CD8-positive, alpha-beta T cell (primary cell): ENCODE measurements at regions of chr20 and their contacts with region 1.

Region 1: DNA sequence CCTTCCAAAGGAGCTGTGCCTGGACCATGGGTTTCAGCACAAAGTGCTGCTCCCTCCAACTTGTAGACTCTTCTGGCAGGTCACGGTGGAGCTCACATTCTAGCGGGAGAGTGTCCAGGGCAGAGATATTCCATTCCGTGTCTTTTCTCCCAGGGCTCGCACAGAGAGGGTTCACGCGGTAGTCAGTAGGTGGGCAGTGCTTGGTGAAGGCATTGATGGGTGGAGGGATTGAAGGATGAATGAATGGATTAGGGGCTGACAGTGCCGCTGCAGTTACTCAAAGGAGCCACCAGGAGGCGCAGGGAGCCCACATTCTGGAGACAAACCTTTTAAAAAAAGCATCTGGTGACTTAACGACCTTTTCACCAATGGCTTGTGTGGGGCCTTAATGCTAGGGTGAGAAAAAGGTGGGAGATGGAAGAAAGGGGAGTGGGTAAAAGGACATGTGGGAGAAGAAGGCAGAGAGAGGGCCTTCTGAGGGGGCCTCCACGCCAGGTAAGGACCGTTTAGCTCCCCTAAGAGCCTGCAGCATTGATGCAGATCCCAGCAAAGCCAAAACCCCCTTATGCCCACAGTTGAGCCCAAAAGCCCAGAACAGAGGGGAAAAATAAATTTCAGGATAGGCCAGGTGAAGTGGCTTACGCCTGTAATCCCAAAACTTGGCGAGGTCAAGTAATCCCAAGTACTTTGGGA is 17.5 kb upstream of the FAM110A start:
- DNase-seq: peak; percentile 44 to 81 (median 72)
- ATAC-seq: peak; percentile 79
- H3K4me3 ChIP-seq: no peak overlapping the region
- H3K4me3 Mint-ChIP-seq: no peak overlapping the region
- H3K27ac ChIP-seq: no peak overlapping the region
- H3K27ac Mint-ChIP-seq: no peak overlapping the region
- H3K4me1 ChIP-seq: peaks cover 3% of the 10 kb centered on the region
- H3K4me1 Mint-ChIP-seq: peaks cover 5% of the 10 kb centered on the region
- H3K27me3 ChIP-seq: no peaks in the 10 kb centered on the region
- H3K27me3 Mint-ChIP-seq: peaks cover 19% of the 10 kb centered on the region
- CTCF ChIP-seq: peak; percentile 93

Region 2: GRCh38 chr20:833450-834150 is 17.5 kb after region 1 on chr20 and contains the start of gene FAM110A:
- CTCF ChIA-PET with region 1: interaction called, 14 read pairs
- POLR2A ChIA-PET with region 1: no interaction called
- intact Hi-C with region 1: no loop called
- DNase-seq: peak; percentile 89 to 99 (median 96)
- ATAC-seq: peak; percentile 96
- H3K4me3 ChIP-seq: peak within 1 kb of the TSS; percentile 90 to 96
- H3K4me3 Mint-ChIP-seq: peak within 1 kb of the TSS; percentile 91
- H3K27ac ChIP-seq: peak within 1 kb of the TSS; percentile 85 to 96
- H3K27ac Mint-ChIP-seq: peak within 1 kb of the TSS; percentile 82
- H3K4me1 ChIP-seq: peaks cover 27% of the 10 kb centered on the region
- H3K4me1 Mint-ChIP-seq: peaks cover 43% of the 10 kb centered on the region
- H3K27me3 ChIP-seq: no peaks in the 10 kb centered on the region
- H3K27me3 Mint-ChIP-seq: no peaks in the 10 kb centered on the region
- CTCF ChIP-seq: no peak
- total RNA-seq, gene FAM110A: 6.7 to 7.7 TPM

Region 3: DNA sequence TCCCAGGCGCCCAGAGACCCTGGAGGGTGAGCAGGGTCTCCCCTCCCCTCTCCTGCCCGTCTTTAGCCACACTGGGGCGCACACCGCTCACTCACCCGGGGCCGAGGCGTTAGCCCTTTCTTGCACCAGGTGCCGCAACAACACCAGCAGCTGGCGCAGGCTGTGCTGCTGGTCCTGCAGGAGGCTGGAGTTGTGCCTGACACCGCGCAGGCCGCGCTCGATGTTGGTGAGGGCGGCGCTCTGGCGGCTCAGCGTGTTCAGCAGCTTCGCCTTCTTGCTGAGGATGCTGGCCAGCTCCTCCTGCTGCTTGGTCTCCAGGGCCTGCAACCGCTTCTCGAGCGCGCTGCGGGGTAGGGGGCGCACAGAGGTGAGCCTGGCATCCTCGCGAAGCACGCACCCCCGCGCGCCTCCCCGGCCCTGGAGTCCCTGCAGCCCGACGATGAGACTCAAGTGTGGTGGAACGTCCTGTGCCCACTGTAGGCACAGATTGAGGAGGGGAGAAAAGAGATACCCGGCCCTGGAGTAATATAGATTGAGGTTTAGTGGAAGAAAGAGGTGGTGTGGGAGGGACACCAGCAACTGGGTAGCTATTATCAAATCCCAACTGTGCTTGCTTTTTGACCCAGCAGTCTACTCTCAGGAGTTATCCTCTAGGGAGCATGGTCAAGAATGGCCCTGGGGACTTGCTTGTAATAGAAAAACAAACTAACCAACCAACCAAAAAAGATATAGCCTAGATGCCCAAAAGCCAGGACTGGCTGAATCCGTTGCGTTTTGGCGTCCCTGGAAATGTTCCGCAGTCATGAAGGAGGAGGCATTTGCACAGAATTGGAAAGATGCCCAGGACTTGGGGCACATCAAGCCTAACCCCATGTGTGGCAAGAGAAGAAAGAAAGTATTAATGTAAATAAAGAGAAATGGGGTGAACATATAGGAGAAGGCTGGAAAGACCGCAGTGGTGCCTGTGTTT is 69.2 kb after region 1 on chr20:
- CTCF ChIA-PET with region 1: interaction called, 13 read pairs
- POLR2A ChIA-PET with region 1: no interaction called
- intact Hi-C with region 1: loop called in 1 of 2 experiments (anchors 2 kb)
- DNase-seq: peak in 1 of 9 experiments; percentile 21
- ATAC-seq: no peak
- H3K4me3 ChIP-seq: no peak overlapping the region
- H3K4me3 Mint-ChIP-seq: no peak overlapping the region
- H3K27ac ChIP-seq: no peak overlapping the region
- H3K27ac Mint-ChIP-seq: no peak overlapping the region
- H3K4me1 ChIP-seq: no peaks in the 10 kb centered on the region
- H3K4me1 Mint-ChIP-seq: peaks cover 3% of the 10 kb centered on the region
- H3K27me3 ChIP-seq: no peaks in the 10 kb centered on the region
- H3K27me3 Mint-ChIP-seq: peaks cover 18% of the 10 kb centered on the region
- CTCF ChIP-seq: no peak

Region 4: DNA sequence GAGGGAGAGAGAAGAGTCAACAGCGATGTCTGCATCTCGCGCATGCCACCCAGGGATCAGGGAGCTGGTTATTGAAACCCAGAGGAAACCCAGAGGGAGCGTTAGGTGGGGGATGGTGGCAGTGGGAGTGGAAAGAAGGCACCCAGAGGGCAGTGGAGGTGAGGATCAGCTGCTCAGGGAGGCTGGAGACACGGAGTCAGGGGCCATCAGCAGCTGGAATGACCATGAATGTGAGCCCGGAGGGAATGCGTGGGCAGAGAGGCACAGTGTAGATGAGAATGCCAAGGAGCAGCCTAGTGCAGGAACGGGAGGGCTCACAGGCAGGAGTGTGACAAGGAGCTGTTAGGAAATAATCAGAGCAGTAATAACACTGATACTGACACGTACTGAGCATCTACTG is 149.9 kb after region 1 on chr20:
- CTCF ChIA-PET with region 1: interaction called, 16 read pairs
- POLR2A ChIA-PET with region 1: no interaction called
- intact Hi-C with region 1: no loop called
- DNase-seq: no peak
- ATAC-seq: no peak
- H3K4me3 ChIP-seq: no peak overlapping the region
- H3K4me3 Mint-ChIP-seq: no peak overlapping the region
- H3K27ac ChIP-seq: no peak overlapping the region
- H3K27ac Mint-ChIP-seq: no peak overlapping the region
- H3K4me1 ChIP-seq: no peaks in the 10 kb centered on the region
- H3K4me1 Mint-ChIP-seq: no peaks in the 10 kb centered on the region
- H3K27me3 ChIP-seq: no peaks in the 10 kb centered on the region
- H3K27me3 Mint-ChIP-seq: peaks cover 16% of the 10 kb centered on the region
- CTCF ChIP-seq: no peak

Region 5: GRCh38 chr20:1171461-1172093 is 355.5 kb after region 1 on chr20:
- CTCF ChIA-PET with region 1: no interaction called
- POLR2A ChIA-PET with region 1: no interaction called
- intact Hi-C with region 1: no loop called
- DNase-seq: peak in 2 of 9 experiments; percentile 9 to 17
- ATAC-seq: no peak
- H3K4me3 ChIP-seq: no peak overlapping the region
- H3K4me3 Mint-ChIP-seq: no peak overlapping the region
- H3K27ac ChIP-seq: no peak overlapping the region
- H3K27ac Mint-ChIP-seq: no peak overlapping the region
- H3K4me1 ChIP-seq: no peaks in the 10 kb centered on the region
- H3K4me1 Mint-ChIP-seq: no peaks in the 10 kb centered on the region
- H3K27me3 ChIP-seq: no peaks in the 10 kb centered on the region
- H3K27me3 Mint-ChIP-seq: no peaks in the 10 kb centered on the region
- CTCF ChIP-seq: no peak

Region 6: DNA sequence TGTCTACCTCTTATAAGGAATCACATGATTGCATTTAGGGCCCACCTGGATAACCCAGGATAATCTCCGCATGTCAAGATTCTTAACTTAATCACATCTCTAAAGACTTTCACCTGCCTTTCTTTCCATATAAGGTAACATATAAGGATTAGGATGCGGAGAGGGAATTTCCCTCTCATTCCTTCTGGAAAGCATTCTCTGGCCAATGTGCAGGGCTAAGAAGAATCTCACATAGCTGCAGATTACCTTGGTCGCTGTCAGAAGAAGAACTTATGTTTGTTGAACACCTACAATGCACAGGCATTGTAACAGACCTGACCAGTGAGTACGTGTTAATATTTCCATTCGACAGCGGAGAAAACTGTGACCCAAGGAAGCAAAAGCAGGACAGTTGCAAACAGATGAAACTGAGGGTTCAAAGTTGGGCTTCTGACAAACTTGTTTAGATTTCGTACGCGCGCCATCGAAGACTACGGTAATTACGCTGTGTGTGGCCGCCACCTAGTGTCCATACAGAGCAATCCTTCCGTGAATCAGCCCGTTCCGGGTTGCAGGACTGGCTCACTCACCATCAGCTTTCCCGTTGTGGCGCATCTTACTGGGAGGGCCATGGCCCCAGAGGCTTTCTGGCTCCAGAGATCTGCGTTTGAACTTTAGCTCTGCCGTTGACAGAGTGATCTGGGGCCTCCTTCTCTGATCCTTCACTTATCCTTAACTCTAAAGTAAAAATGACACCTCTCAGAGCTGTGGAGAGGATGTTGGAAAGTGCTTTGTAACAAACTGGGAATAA is 396.7 kb after region 1 on chr20:
- CTCF ChIA-PET with region 1: interaction called, 10 read pairs
- POLR2A ChIA-PET with region 1: no interaction called
- intact Hi-C with region 1: loop called in 1 of 2 experiments (anchors 1 kb)
- DNase-seq: peak; percentile 26 to 80 (median 68)
- ATAC-seq: peak; percentile 93
- H3K4me3 ChIP-seq: no peak overlapping the region
- H3K4me3 Mint-ChIP-seq: no peak overlapping the region
- H3K27ac ChIP-seq: no peak overlapping the region
- H3K27ac Mint-ChIP-seq: no peak overlapping the region
- H3K4me1 ChIP-seq: peaks cover 24% of the 10 kb centered on the region
- H3K4me1 Mint-ChIP-seq: peaks cover 34% of the 10 kb centered on the region
- H3K27me3 ChIP-seq: no peaks in the 10 kb centered on the region
- H3K27me3 Mint-ChIP-seq: peaks cover 8% of the 10 kb centered on the region
- CTCF ChIP-seq: peak; percentile 88

Region 7: DNA sequence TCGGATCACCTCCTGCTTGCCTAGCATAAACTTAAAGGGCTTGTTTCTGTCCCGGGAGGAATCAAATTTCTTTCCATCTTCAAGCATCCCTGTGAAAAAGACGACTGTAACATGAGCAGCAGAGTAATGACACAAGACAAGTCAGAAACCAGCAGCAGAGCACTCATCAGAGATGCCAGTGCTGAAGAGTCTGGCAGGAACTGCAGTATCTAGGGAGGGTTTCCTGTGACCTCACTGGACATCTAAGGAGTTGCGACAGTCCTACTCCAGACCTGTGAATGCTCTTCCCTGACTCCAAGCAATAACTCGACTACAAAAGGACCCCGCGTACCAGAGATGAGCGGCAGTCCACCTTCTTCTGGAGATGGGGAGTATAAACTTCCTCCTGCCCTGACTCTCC is 559.5 kb after region 1 on chr20:
- CTCF ChIA-PET with region 1: no interaction called
- POLR2A ChIA-PET with region 1: no interaction called
- intact Hi-C with region 1: no loop called
- DNase-seq: no peak
- ATAC-seq: no peak
- H3K4me3 ChIP-seq: no peak overlapping the region
- H3K4me3 Mint-ChIP-seq: no peak overlapping the region
- H3K27ac ChIP-seq: no peak overlapping the region
- H3K27ac Mint-ChIP-seq: peak overlapping the region; percentile 29
- H3K4me1 ChIP-seq: peaks cover 57% of the 10 kb centered on the region
- H3K4me1 Mint-ChIP-seq: peaks cover 84% of the 10 kb centered on the region
- H3K27me3 ChIP-seq: no peaks in the 10 kb centered on the region
- H3K27me3 Mint-ChIP-seq: no peaks in the 10 kb centered on the region
- CTCF ChIP-seq: no peak